Right ventricle myocardium inferior (tissue), 1 donor: ENCODE measurements at regions of chr17 and their contacts with region 1.

Region 1: GRCh38 chr17:78497115-78497540 is 80.1 kb downstream of the DNAH17 start:
- DNase-seq: peak; percentile 82
- ATAC-seq: peak; percentile 86

Region 2: DNA sequence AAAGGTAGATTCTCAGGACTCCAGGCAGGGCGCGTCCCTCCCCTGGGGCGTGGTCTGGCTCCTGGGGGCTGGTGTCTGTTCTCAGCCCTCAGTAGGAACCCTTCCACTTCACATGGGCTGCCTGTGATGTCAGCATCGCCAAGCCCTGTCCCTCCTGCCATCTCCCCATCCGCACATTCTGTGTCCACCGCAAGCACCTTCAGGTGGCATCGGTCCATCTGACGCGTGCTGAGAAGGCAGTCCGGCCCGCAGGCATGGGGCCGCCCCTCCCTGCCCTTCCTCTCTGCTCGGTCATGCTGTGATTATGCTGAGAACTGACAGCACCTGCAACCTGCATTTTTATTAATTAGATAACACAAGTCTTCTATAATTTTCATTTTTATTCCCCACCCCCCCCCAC is 92.8 kb after region 1 on chr17:
- intact Hi-C with region 1: loop called (anchors 5 kb)
- DNase-seq: no peak
- ATAC-seq: no peak

Region 3: DNA sequence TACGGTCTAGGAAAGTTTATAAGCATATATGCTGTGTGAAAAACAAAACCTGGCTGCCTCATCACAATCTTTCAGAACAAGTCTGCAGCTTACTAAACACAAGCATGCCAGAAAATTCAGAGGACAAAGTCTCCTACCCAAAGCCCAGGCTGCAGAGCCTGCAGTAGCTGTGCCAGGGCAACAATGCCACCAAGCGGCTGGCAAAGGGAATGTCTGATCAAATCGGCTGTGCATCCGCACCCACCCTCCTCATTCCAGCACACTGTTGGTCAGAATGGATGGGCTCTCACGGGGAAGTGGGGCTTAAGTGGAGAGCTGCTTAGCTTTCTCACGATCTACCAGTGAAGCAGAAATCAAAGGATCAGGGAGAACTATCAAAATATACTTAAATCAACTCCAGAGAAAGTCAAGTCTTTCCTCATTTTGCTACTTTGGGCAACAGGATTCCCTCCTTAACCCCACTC is 211.4 kb after region 1 on chr17:
- intact Hi-C with region 1: loop called (anchors 2 kb)
- DNase-seq: peak; percentile 85
- ATAC-seq: peak; percentile 80

Region 4: DNA sequence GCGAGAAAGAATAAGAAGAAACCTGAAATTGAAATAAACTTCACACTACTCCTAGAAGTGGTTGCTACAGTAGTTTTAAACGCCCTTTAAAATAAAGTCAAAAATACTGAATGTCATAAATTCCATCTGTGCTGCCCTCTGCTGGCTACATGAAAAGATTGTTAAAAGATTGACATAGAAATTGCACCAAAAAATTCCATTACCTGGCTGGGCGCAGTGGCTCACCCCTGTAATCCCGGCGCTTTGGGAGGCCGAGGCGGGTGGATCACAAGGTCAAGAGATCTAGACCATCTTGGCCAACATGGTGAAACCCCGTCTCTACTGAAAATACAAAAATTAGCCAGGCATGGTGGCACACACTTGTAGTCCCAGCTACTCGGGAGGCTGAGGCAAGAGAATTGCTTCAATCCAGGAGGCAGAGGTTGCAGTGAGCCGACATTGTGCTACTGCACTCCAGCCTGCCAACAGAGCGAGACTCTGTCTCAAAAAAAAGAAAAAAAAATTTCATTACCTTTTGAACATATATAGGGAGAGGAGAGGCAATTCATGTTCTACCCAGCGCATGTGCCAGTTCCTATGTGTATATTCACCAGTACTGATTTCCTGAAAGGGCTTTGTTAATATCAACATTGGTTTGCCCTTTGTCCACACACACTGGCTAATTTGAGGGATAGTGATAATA is 248.4 kb after region 1 on chr17:
- intact Hi-C with region 1: loop called (anchors 5 kb)
- DNase-seq: no peak
- ATAC-seq: no peak

Region 5: DNA sequence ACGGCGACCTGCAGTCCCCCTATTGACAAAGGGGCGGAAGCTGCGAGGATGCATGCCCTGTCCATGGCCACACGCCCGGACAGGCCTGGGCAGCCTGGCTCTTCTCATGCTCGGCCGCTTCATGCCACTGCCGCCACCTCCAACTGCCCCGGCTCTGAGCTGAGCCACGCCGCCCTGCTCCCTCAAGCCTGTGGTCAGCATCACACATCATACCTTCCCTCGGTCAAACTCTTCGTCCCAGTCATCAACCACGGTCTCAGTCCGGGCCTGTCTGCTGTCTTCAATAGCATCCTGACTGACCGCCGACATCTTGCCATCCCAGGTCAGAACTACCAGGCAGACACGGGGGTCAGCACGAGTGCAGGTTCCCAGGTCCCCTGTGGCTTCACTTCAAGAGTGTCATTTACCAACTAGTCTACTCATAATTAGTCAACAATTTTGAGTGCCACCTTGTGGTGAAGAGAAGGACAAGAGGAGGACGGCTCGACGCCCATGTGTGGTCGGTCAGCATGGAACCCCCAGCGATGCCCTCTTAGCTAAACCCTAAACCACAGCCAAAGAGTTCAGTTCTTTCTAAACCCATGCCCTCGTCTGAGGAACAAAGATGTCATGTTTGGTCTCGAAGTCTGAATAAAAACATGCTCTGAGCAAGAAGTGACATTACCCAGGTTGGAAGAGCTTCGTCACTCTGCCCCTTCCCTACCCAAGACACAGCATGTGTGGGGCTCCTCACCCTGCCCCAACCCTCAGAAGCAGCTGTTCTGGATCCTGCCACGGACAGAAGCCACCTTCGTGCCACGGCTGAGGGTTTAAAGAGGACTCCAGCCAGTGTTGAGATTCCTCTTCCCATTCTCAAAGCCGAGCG is 301.8 kb after region 1 on chr17:
- intact Hi-C with region 1: loop called (anchors 1 kb)
- DNase-seq: no peak
- ATAC-seq: no peak